ENCODE measurements at regions of chr10 and their contacts with region 1.

Region 1: GRCh38 chr10:95246579-95247051 is 44.2 kb downstream of the PDLIM1 start:
- DNase-seq: peak; percentile 67
- H3K4me3 Mint-ChIP-seq: no peak overlapping the region
- H3K27ac Mint-ChIP-seq: no peak overlapping the region
- H3K4me1 Mint-ChIP-seq: peaks cover 15% of the 10 kb centered on the region
- H3K27me3 Mint-ChIP-seq: peaks cover 16% of the 10 kb centered on the region

Region 2: DNA sequence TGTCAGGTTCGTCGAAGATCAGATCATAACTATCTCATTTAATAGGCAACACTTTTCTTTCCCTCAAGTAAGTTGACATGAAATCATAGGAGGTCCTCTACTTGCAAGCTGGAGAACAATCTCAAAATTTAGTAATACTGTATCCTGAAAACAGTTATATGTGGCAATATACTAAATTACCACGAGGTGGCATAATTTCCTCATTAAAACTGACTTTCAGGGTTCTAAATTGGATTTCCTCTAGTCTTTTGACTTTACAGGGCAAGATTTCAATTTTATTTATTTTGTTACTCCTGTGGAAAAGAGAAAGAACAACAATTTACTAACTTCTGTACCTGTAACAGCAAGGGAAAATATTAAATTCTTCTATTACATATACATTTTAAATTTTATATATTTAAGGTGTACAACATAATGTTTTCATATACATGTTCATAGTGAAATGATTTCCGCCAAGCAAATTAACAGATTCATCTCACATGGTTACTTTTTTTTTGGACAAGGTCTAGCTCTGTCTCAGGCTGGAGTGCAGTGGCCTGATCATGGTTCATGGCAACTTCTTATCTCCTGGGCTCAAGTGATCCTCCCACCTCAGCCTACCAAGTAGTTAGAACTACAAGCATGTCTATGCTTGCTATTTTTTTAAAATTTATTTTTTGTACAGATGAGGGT is 616.5 kb before region 1 on chr10:
- CTCF ChIA-PET with region 1: interaction called, 3 read pairs
- POLR2A ChIA-PET with region 1: no interaction called
- intact Hi-C with region 1: loop called (anchors 10 kb)
- DNase-seq: no peak
- H3K4me3 Mint-ChIP-seq: no peak overlapping the region
- H3K27ac Mint-ChIP-seq: no peak overlapping the region
- H3K4me1 Mint-ChIP-seq: no peaks in the 10 kb centered on the region
- H3K27me3 Mint-ChIP-seq: peaks cover 2% of the 10 kb centered on the region

Region 3: GRCh38 chr10:95183271-95184230 is 63.1 kb before region 1 on chr10:
- CTCF ChIA-PET with region 1: interaction called, 28 read pairs
- POLR2A ChIA-PET with region 1: no interaction called
- intact Hi-C with region 1: loop called (anchors 1 kb)
- DNase-seq: peak; percentile 82
- H3K4me3 Mint-ChIP-seq: peak overlapping the region; percentile 63
- H3K27ac Mint-ChIP-seq: no peak overlapping the region
- H3K4me1 Mint-ChIP-seq: peaks cover 6% of the 10 kb centered on the region
- H3K27me3 Mint-ChIP-seq: peaks cover 25% of the 10 kb centered on the region

Region 4: DNA sequence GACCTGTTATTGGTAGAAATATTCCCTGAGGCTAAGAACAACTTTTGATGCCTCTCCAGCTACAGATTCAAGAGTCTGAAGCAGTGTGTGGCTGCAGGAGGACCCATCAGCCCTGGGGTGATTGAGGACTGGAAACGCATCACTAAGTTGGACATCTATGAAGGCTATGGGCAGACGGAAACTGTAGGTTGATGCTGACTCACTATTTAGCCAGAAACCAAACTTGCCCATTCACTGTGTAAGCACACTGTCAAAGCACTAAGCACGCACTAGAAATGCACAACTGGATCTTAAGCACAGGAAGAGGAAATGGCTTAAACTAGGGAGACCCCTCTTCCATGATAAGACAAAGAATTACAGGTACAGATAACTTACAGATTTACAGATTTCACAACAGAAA is 31.8 kb before region 1 on chr10:
- CTCF ChIA-PET with region 1: interaction called, 15 read pairs
- POLR2A ChIA-PET with region 1: no interaction called
- intact Hi-C with region 1: loop called (anchors 2 kb)
- DNase-seq: no peak
- H3K4me3 Mint-ChIP-seq: no peak overlapping the region
- H3K27ac Mint-ChIP-seq: no peak overlapping the region
- H3K4me1 Mint-ChIP-seq: no peaks in the 10 kb centered on the region
- H3K27me3 Mint-ChIP-seq: peaks cover 6% of the 10 kb centered on the region

Region 5: GRCh38 chr10:95264176-95265051 is 17.8 kb after region 1 on chr10:
- CTCF ChIA-PET with region 1: interaction called, 15 read pairs
- POLR2A ChIA-PET with region 1: no interaction called
- intact Hi-C with region 1: no loop called
- DNase-seq: no peak
- H3K4me3 Mint-ChIP-seq: no peak overlapping the region
- H3K27ac Mint-ChIP-seq: no peak overlapping the region
- H3K4me1 Mint-ChIP-seq: no peaks in the 10 kb centered on the region
- H3K27me3 Mint-ChIP-seq: no peaks in the 10 kb centered on the region

Region 6: DNA sequence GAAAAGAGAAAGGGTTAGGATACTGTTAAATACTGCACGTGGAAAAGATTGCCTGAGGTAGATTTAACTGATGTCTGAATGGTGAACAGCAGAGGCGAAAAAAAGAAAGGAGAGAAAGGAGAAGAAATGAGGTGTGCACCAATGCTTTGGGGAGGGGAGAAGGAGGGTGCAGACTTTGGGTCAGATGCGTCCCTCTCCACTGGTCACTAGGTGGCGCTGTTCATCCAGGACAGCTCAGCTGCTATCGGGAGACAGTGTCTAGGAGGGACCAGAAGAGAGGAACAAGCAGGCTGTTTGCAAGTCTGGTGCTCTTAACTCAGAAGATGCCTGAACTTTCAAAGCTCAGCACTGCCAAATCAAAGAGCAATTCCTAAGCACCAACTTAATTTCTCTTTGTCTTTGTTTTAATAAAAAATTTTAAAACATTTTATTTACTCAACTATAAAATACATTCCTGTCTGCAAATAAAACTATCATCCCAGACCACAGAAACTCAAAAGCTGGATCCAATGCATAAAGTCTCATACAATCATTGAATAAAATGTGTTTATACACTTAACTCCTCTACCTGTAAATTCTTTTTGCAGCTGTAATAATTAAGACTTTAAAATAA is 128.1 kb after region 1 on chr10:
- CTCF ChIA-PET with region 1: interaction called, 15 read pairs
- POLR2A ChIA-PET with region 1: no interaction called
- intact Hi-C with region 1: no loop called
- DNase-seq: peak; percentile 81
- H3K4me3 Mint-ChIP-seq: no peak overlapping the region
- H3K27ac Mint-ChIP-seq: no peak overlapping the region
- H3K4me1 Mint-ChIP-seq: peaks cover 9% of the 10 kb centered on the region
- H3K27me3 Mint-ChIP-seq: peaks cover 14% of the 10 kb centered on the region

Region 7: GRCh38 chr10:95832216-95833041 is 585.8 kb after region 1 on chr10:
- CTCF ChIA-PET with region 1: no interaction called
- POLR2A ChIA-PET with region 1: no interaction called
- intact Hi-C with region 1: no loop called
- DNase-seq: peak; percentile 77
- H3K4me3 Mint-ChIP-seq: peak overlapping the region; percentile 72
- H3K27ac Mint-ChIP-seq: peak overlapping the region; percentile 90
- H3K4me1 Mint-ChIP-seq: peaks cover 37% of the 10 kb centered on the region
- H3K27me3 Mint-ChIP-seq: no peaks in the 10 kb centered on the region